Activated CD4-positive, alpha-beta memory T cell treated with anti-CD3 and anti-CD28 coated beads, Interleukin-2, amount 10 ng/mL, durations not matched to agents 7 days and 5 days (primary cell): ENCODE measurements at regions of chr2 and their contacts with region 1.

Region 1: DNA sequence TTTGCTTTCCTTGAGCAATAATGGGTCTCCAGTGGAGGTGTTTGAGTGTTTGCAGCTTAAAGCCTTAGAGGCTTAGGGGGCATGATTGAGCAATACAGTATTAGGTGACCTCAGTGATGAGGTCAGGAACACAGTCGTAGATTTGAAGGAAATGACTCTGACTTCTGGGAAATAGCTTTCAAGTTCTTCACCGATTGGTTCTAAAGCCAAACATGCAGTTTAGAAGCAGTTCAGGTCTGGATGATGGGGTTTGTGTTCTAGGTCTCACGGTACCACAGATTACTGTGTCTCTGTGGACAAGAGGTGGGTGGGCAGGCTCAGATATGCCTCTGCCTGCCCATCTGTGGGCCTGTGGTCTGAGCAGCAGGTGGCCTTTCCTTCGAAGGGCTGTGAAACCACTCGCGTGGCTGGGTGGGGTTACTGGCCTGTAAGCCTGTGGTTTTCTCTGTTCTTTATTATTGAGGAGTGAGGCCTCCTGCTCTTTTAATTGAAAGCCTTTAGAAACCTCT is 7.8 kb downstream of the MTHFD2 start:
- DNase-seq: peak; percentile 67
- H3K4me3 Mint-ChIP-seq: peak overlapping the region; percentile 64
- H3K27ac Mint-ChIP-seq: peak overlapping the region; percentile 96
- H3K4me1 Mint-ChIP-seq: peaks cover 78% of the 10 kb centered on the region
- H3K27me3 Mint-ChIP-seq: no peaks in the 10 kb centered on the region

Region 2: DNA sequence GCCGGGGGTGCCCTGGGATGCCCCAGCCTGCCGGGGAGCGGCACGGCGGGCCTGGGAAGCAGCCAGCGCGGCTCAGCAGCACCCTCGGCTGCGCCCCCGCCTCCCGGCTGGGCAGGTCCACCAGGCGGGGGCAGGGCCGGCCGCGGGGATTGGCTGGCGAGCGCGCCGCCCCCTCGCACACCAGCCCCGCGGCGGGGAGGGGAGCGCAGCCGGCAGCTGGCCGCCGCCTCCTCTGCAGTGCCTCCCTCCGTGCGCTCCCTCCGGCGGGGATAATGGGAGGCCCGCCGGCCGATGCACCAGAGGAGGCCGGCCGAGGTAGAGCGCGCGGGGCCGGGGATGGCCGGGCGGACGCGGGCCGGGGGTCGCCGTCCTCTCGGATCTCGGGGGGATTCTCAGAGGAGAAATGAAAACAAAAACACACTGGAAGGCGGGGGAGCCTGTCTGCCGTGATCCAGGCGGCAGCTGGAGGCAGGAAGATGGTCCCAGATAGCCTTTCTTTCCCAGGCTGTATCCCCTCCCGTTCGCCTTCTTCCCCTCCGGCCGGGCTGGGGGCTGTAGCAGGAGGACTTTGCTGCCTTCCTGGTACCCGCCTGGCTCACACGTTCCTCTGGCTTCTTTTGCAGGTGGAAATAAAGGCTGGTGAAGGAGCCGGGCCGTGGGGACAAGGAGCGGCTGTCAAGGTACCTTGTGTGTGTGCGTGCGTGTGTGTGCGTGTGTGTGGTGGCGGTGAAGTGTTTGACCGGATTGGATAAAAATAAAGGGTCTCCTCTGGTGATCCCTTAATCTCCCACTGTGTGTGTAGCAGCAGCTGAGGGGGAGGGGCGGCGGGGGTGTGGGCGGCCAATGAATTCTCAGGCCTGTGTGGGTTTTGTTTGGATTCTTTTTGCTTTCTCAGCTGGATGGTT is 203.5 kb before region 1 on chr2:
- CTCF ChIA-PET with region 1: no interaction called
- POLR2A ChIA-PET with region 1: no interaction called
- DNase-seq: peak; percentile 80
- H3K4me3 Mint-ChIP-seq: peak overlapping the region; percentile 77
- H3K27ac Mint-ChIP-seq: no peak overlapping the region
- H3K4me1 Mint-ChIP-seq: peaks cover 38% of the 10 kb centered on the region
- H3K27me3 Mint-ChIP-seq: peaks cover 2% of the 10 kb centered on the region

Region 3: DNA sequence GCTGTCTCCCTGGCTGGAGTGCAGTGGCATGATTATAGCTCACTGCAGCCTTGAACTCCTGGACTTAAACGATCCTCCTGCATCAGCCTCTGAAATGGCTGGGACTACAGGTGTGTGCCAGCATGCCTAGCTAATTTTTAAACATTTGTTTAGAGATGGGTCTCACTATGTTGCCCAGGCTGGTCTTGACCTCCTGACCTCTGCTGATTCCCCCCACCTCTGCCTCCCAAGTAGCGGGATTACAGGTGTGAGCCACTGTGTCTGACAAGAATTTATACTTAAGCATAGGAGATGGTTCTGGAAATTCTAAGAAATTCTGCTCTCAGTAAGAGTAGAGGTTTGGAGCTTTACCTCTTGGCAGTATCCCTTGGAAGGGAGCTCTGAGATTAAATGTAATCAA is 10.4 kb after region 1 on chr2:
- CTCF ChIA-PET with region 1: interaction called, 5 read pairs
- POLR2A ChIA-PET with region 1: interaction called, 29 read pairs
- DNase-seq: no peak
- H3K4me3 Mint-ChIP-seq: no peak overlapping the region
- H3K27ac Mint-ChIP-seq: no peak overlapping the region
- H3K4me1 Mint-ChIP-seq: peaks cover 2% of the 10 kb centered on the region
- H3K27me3 Mint-ChIP-seq: no peaks in the 10 kb centered on the region